GM10248 (cell line): ENCODE measurements at regions of chr1 and their contacts with region 1.

Region 1: GRCh38 chr1:110209715-110210603 is at the start of gene KCNC4:
- DNase-seq: peak; percentile 88
- CTCF ChIP-seq: no peak

Region 2: DNA sequence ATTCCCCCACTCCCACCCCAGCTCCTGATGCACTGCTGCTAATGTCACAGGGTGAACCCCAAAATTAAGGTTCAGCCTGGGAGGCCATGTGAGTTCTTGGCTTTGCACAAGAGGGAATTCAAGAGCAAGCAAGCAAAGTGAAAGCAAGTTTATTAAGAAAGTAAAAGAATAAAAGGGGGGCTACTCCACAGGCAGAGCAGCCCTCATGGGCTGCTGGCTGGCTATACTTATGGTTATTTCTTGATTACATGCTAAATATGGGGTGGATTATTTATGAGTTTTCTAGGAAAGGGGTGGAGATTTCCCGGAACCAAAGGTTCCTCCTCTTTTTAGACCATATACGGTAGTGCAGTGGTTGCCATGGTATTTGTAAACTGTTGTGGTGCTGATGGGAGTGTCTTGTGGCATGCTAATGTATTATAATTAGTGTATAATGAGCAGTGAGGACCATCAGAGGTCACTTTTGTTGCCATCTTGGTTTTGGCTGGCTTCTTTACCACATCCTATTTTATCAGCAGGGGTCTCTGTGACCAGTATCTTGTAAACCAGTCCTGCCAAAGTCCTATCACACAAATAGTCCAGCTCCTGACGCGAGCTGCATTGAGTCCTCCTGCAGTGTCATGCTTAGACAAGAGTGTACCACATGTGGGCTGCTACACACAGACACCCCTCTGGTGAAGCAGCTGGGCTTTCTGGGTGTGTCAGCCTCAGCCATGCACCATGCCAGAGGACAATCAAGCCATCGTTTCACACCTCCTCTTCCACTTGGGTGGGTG is 345.7 kb before region 1 on chr1:
- CTCF ChIA-PET with region 1: no interaction called
- POLR2A ChIA-PET with region 1: no interaction called
- DNase-seq: no peak
- CTCF ChIP-seq: no peak

Region 3: GRCh38 chr1:110227774-110228173 is 17.8 kb after region 1 on chr1:
- CTCF ChIA-PET with region 1: interaction called, 26 read pairs
- POLR2A ChIA-PET with region 1: no interaction called
- DNase-seq: no peak
- CTCF ChIP-seq: no peak

Region 4: GRCh38 chr1:110262846-110263631 is 53.1 kb after region 1 on chr1:
- CTCF ChIA-PET with region 1: interaction called, 38 read pairs
- POLR2A ChIA-PET with region 1: no interaction called
- DNase-seq: no peak
- CTCF ChIP-seq: no peak

Region 5: DNA sequence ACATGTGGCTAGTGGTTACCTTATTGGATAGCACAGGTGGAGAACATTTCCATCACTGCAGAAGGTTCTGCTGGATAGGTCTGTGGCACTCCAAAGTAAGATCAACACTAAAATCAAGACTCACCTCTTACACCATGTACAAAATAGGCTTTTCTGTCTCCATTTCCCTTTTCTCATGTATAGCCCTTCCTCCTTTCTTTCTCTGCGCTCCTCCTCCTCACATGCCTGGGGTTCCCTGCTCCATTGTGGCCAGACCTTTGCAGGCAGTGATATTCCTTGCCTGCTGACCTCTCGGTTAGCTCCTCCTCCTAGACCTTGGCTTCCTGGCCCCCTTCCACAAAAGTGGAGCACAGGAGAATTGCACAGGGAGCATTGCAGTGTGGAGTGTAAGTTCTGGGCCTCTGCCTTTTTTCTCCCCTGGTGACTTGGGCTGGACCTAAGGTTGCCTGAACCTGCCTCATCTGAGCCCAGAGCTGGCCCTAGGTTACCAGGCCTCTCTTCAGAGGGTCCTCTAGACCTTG is 96.0 kb after region 1 on chr1:
- CTCF ChIA-PET with region 1: interaction called, 352 read pairs
- POLR2A ChIA-PET with region 1: no interaction called
- DNase-seq: no peak
- CTCF ChIP-seq: no peak

Region 6: DNA sequence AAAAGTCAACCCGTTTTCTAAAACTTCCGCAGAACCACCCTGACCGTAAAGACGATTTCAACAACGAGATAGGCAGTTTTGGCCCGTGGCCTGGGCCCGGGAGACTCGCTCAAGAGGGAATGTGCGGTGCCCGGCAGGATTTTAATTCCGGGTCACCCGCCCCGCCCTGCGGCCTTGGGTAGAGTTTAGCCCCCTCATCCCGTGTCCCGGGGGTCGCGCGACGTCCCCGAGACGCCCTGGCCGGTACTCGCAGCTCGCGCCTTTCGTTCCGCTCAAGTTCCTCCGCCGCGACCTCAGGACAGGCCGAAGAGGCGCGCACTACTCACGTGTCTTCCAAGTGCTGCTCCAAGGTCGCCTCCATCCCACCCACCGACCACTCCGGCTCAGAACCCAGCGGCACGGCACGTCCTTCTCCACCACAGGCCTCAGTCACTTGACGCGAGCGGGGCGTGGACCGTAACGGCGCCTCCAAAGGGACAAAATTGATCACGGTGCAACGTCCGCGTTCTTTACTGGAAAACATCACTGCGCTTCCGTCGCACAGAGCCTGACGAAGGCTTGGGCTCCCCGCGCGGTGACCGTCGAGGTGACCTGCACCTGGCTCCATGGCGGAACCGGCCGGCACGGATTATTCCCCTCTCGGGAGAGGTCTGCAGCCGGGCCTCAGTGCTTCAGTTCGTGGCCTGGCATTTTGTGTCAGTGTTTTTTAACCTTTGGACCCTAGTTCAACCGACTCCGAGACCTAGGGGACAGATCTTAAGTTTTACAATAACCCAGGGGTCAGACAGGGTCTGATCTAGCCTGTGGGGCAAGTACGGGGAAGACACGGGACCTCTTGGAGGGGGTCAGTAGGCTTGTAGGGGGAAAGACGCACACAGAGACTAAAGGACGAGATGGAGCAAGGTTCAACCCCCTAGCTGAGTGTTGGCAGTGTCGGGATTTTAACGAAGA is 197.6 kb after region 1 on chr1 and contains the start of gene LAMTOR5:
- CTCF ChIA-PET with region 1: interaction called, 19 read pairs
- POLR2A ChIA-PET with region 1: no interaction called
- DNase-seq: peak; percentile 91
- CTCF ChIP-seq: no peak

Region 7: GRCh38 chr1:110471163-110471562 is 261.2 kb after region 1 on chr1:
- CTCF ChIA-PET with region 1: interaction called, 295 read pairs
- POLR2A ChIA-PET with region 1: no interaction called
- DNase-seq: no peak
- CTCF ChIP-seq: no peak